ENCODE measurements at regions of chr6 and their contacts with region 1.

Region 1: DNA sequence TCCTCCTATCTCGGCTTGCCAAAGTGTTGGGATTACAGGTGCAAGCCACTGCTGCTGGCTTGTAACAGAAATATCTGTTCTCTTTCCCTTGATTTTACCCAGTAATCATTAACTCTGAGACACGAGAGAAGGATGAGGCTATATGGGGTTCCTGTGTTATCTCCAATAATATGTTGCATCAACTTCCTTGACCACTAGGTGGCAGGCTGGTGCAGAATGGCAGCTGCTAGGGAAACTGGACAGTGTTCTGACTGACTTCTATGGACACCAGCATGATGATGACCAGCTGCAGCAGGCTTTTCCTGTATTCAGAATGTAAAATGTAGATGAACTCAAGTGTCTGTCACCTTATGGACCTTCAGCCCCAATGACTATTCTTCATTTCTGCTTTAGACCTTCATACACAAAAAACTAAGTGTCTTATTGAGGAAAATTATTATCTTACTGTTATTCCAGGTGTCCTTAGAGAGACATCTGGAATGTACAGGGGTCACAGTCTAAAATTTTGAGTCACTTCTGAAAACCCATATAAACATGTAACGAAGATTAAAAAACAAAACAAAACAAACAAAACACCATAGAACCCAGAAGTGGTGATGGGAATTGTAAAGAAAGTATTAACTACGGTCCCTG is 20.4 kb upstream of the CD109 start:
- H3K4me3 ChIP-seq: no peak overlapping the region
- H3K27ac ChIP-seq: no peak overlapping the region
- H3K4me1 ChIP-seq: no peaks in the 10 kb centered on the region
- CTCF ChIP-seq: peak; percentile 67

Region 2: DNA sequence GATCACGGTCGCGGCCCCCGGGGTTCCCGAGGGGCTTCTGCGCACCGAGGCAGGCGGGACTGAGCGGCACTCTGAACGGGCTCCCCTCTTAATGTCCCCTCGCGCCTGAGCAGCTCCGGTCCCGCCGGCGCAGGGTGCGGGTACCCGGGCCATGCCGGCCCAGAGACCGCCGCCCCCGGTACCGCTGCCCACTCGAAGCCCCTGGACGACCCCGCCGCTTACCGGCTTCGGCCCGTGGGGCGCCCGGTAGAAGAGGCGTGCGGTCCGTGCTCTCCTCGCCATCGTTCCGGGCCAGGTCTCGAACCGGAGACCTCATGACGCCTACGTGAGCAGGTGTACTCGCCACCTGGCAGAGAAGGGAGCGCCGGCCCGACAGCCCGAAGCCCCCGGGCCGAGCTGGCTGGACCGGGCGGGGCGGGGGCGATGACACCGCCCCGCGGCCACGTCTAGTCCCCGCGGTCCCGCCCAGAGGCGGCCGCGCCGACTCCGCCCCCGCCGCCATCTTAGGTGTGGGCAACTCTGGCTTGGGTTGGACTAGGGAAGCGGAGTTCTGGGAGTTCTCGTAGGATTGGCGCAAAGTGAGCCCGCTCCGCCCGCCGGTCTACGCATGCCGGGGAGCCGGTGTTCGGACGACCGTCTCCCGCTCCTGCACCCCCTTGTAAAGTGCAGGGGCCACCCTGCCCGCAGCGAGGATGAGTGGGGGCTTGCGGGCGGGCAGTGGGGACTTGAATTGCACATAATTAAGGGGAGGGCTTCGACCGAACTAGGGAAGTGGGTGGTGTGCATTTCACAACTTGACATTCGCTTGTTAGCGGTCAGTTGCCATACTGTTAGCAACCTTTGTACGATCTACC is 21.8 kb before region 1 on chr6 and contains the start of gene SLC17A5:
- CTCF ChIA-PET with region 1: interaction called, 10 read pairs
- POLR2A ChIA-PET with region 1: no interaction called
- H3K4me3 ChIP-seq: peak within 1 kb of the TSS; percentile 75
- H3K27ac ChIP-seq: peak within 1 kb of the TSS; percentile 96
- H3K4me1 ChIP-seq: no peaks in the 10 kb centered on the region; the same call in 1 of the 2 replicates
- CTCF ChIP-seq: no peak

Region 3: DNA sequence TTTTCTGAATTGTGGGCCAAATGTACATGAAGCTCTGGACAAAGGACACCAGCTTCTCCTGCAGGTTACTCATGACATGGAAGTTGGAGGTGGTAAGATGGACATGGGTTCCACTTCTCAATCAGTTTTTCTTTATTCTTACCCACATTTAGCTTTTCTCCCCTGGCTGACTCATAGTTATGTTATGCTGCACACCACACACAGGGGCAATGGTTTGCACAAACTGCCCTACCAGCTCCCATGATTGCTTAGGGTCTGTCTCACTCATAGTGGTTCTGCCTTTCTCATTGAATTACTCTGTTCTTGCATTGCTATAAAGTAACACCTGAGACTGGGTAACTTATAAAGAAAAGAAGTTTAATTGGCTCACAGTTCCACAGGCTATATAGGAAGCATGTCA is 15.9 kb after region 1 on chr6:
- CTCF ChIA-PET with region 1: interaction called, 27 read pairs
- POLR2A ChIA-PET with region 1: no interaction called
- H3K4me3 ChIP-seq: no peak overlapping the region
- H3K27ac ChIP-seq: no peak overlapping the region
- H3K4me1 ChIP-seq: peaks cover 1% of the 10 kb centered on the region; the same call in 1 of the 2 replicates
- CTCF ChIP-seq: no peak

Region 4: GRCh38 chr6:73704260-73704659 is 28.7 kb after region 1 on chr6:
- CTCF ChIA-PET with region 1: interaction called, 12 read pairs
- POLR2A ChIA-PET with region 1: no interaction called
- H3K4me3 ChIP-seq: no peak overlapping the region
- H3K27ac ChIP-seq: peak overlapping the region; percentile 3; the same call in 1 of the 2 replicates
- H3K4me1 ChIP-seq: 0 out of 2 replicates have a peak, but pooled peaks cover 3% of the 10 kb centered on the region
- CTCF ChIP-seq: no peak

Region 5: GRCh38 chr6:73713410-73714147 is 38.0 kb after region 1 on chr6:
- CTCF ChIA-PET with region 1: interaction called, 11 read pairs
- POLR2A ChIA-PET with region 1: no interaction called
- H3K4me3 ChIP-seq: no peak overlapping the region
- H3K27ac ChIP-seq: no peak overlapping the region
- H3K4me1 ChIP-seq: peaks cover 14% of the 10 kb centered on the region
- CTCF ChIP-seq: no peak

Region 6: DNA sequence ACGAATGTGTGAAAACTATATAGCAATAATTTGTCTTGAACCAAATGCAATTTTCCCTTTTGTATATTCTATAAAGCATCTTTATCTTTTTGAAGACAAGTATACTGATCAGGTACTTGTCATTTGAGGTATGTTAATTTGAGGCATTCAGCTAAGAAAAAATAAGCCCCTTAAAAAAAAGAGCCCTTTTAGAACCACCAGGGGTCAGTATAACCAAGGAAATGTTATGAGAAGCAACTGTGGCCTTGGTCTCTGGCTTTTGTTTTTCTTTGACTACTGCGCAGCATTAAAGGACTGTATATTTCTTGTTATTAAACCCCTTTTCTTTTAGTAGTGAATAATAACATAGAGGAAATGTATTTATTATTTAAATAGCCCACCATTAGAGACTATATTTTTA is 63.5 kb after region 1 on chr6:
- CTCF ChIA-PET with region 1: interaction called, 179 read pairs
- POLR2A ChIA-PET with region 1: no interaction called
- H3K4me3 ChIP-seq: no peak overlapping the region
- H3K27ac ChIP-seq: no peak overlapping the region
- H3K4me1 ChIP-seq: no peaks in the 10 kb centered on the region
- CTCF ChIP-seq: peak; percentile 33; the same call in 1 of the 2 replicates

Region 7: GRCh38 chr6:73790574-73790973 is 115.0 kb after region 1 on chr6:
- CTCF ChIA-PET with region 1: no interaction called
- POLR2A ChIA-PET with region 1: no interaction called
- H3K4me3 ChIP-seq: no peak overlapping the region
- H3K27ac ChIP-seq: no peak overlapping the region
- H3K4me1 ChIP-seq: no peaks in the 10 kb centered on the region
- CTCF ChIP-seq: no peak